Right cardiac atrium (tissue), 5 donors: ENCODE measurements at regions of chr19 and their contacts with region 1.

Region 1: GRCh38 chr19:38647368-38647965 is at the start of gene ACTN4:
- DNase-seq: peak; percentile 99 to 100 (median 100)
- ATAC-seq: peak; percentile 88 to 92
- H3K4me3 ChIP-seq: peak within 1 kb of the TSS; percentile 93
- H3K27ac ChIP-seq: peak within 1 kb of the TSS; percentile 80
- H3K4me1 ChIP-seq: peaks cover 9% of the 10 kb centered on the region
- H3K27me3 ChIP-seq: no peaks in the 10 kb centered on the region
- total RNA-seq, gene ACTN4: 116 to 226 (median 122) TPM

Region 2: GRCh38 chr19:38683393-38684080 is 36.1 kb after region 1 on chr19:
- intact Hi-C with region 1: loop called in 1 of 4 experiments (anchors 5 kb)
- DNase-seq: peak in 2 of 3 donors; percentile 66 to 68
- ATAC-seq: peak; percentile 69 to 70
- H3K4me3 ChIP-seq: no peak overlapping the region
- H3K27ac ChIP-seq: peak overlapping the region; percentile 78
- H3K4me1 ChIP-seq: peaks cover 58% of the 10 kb centered on the region
- H3K27me3 ChIP-seq: no peaks in the 10 kb centered on the region

Region 3: GRCh38 chr19:38693380-38694223 is 46.1 kb after region 1 on chr19:
- intact Hi-C with region 1: loop called in 1 of 4 experiments (anchors 5 kb)
- DNase-seq: peak in 2 of 3 donors; percentile 52 to 66
- ATAC-seq: peak; percentile 31 to 38
- H3K4me3 ChIP-seq: no peak overlapping the region
- H3K27ac ChIP-seq: peak overlapping the region; percentile 90
- H3K4me1 ChIP-seq: peaks cover 45% of the 10 kb centered on the region
- H3K27me3 ChIP-seq: no peaks in the 10 kb centered on the region

Region 4: GRCh38 chr19:38711726-38712153 is 64.3 kb after region 1 on chr19:
- intact Hi-C with region 1: loop called in 3 of 4 experiments (anchors 5 to 10 kb)
- DNase-seq: peak in 2 of 3 donors; percentile 77 to 79
- ATAC-seq: peak; percentile 8
- H3K4me3 ChIP-seq: no peak overlapping the region
- H3K27ac ChIP-seq: peak overlapping the region; percentile 61
- H3K4me1 ChIP-seq: peaks cover 50% of the 10 kb centered on the region
- H3K27me3 ChIP-seq: no peaks in the 10 kb centered on the region

Region 5: GRCh38 chr19:38729653-38730469 is 82.4 kb after region 1 on chr19:
- intact Hi-C with region 1: loop called in 1 of 4 experiments (anchors 5 kb)
- DNase-seq: peak; percentile 80 to 91 (median 90)
- ATAC-seq: peak; percentile 35 to 40
- H3K4me3 ChIP-seq: no peak overlapping the region
- H3K27ac ChIP-seq: no peak overlapping the region
- H3K4me1 ChIP-seq: no peaks in the 10 kb centered on the region
- H3K27me3 ChIP-seq: no peaks in the 10 kb centered on the region

Region 6: DNA sequence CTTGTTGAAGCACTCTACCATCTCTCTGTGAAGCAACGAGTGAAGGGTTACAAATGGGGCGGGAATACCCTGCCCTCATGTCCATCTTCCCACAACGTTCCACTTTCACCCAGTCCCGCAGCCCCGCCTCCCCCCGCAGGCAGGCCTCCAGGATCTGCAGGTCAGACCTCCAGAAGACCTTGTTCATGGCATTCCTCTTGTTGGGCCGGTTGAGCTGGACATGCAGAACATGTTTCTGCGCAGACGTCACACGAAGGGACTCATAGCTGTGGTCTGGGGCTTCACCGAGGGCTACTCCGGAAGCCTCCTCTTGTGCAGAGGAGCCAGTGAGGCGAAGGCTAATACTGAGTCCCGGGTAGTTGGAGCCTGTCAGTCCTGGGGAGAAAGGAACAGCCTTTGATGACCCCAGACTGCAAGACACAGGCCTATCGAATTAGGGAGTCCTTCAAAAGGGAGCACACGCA is 183.7 kb after region 1 on chr19:
- intact Hi-C with region 1: loop called in 2 of 4 experiments (anchors 10 kb)
- DNase-seq: peak; percentile 74 to 87 (median 86)
- ATAC-seq: peak; percentile 59 to 63
- H3K4me3 ChIP-seq: peak overlapping the region; percentile 74
- H3K27ac ChIP-seq: peak overlapping the region; percentile 97
- H3K4me1 ChIP-seq: peaks cover 10% of the 10 kb centered on the region
- H3K27me3 ChIP-seq: no peaks in the 10 kb centered on the region